Activated naive CD4-positive, alpha-beta T cell treated with anti-CD3 and anti-CD28 coated beads for 36 hours (primary cell): ENCODE measurements at regions of chr3 and their contacts with region 1.

Region 1: GRCh38 chr3:171876680-171877221 is 33.6 kb downstream of the TMEM212 start:
- DNase-seq: no peak
- H3K4me3 Mint-ChIP-seq: no peak overlapping the region
- H3K27ac Mint-ChIP-seq: no peak overlapping the region
- H3K4me1 Mint-ChIP-seq: peaks cover 4% of the 10 kb centered on the region
- H3K27me3 Mint-ChIP-seq: peaks cover 10% of the 10 kb centered on the region

Region 2: DNA sequence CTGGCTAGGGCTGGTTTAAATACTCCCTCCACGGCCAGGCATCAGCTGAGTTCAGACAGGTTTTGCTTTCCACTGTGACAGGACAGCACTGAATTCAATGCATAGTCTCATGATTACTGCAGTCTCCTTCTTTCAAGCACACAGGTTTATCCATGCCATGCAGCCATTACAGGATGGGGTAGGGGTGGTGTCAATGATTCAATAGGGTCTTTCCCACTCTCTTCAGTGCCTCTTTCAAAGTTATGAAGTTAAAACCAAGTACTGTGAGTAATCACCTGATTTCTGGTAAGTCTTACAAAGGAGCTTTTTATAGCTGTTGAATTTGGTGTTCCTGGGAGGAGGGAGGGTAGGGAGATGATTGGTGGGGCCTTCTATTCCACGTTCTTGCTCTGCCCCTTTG is 13.6 kb after region 1 on chr3:
- CTCF ChIA-PET with region 1: no interaction called
- intact Hi-C with region 1: loop called (anchors 1 kb)
- DNase-seq: peak; percentile 37
- H3K4me3 Mint-ChIP-seq: no peak overlapping the region
- H3K27ac Mint-ChIP-seq: no peak overlapping the region
- H3K4me1 Mint-ChIP-seq: peaks cover 8% of the 10 kb centered on the region
- H3K27me3 Mint-ChIP-seq: peaks cover 3% of the 10 kb centered on the region